WTC11 (cell line): ENCODE measurements at regions of chr12 and their contacts with region 1.

Region 1: DNA sequence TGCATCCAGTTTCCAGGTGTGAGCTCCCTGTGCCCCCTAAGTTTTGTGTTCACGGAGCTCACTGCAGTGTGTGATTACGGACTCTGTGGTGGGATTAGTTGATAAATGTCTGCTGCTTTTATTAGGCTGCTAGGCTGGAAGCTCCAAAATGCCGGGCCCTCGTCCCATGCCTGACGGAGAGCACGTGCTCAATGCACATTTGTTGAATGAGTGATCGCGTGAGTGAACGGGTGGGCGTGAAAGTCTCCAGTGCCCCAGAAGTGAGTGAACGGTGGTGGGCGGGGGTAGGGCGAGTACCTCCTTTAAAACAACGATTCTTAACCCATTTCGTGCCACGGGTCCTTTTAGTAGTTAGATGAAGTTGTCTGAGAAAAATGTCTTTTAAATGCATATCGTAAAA is 175.5 kb downstream of the AACS start:
- DNase-seq: no peak
- ATAC-seq: no peak
- H3K4me3 Mint-ChIP-seq: no peak overlapping the region
- H3K27ac Mint-ChIP-seq: peak overlapping the region; percentile 80; the same call in 1 of the 2 replicates
- H3K4me1 Mint-ChIP-seq: peaks cover 47% of the 10 kb centered on the region
- H3K27me3 Mint-ChIP-seq: no peaks in the 10 kb centered on the region
- CTCF ChIP-seq: no peak

Region 2: DNA sequence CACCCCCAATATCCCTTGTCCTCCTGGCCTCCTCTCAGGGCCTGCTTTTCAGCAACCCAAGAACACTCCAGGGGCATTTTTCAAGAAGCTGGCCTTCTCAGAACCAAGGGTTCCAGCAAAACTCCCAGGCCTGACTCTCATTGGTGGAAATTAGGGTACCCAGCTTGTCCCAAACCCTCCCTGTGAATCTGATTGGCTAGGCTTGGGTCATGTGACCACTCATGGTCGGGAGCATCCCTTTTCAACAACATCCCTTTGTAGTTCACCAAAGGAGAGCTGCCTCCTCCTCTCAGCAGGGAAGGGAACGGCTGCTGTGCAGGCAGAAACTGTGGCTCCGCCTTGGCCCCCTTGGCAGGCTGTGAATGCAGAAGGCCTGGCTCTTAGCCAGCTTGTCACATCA is 81.0 kb before region 1 on chr12:
- CTCF ChIA-PET with region 1: no interaction called
- POLR2A ChIA-PET with region 1: no interaction called
- DNase-seq: no peak
- ATAC-seq: peak; percentile 18; the same call in 1 of the 2 replicates
- H3K4me3 Mint-ChIP-seq: no peak overlapping the region
- H3K27ac Mint-ChIP-seq: no peak overlapping the region
- H3K4me1 Mint-ChIP-seq: peaks cover 8% of the 10 kb centered on the region
- H3K27me3 Mint-ChIP-seq: no peaks in the 10 kb centered on the region; the same call in none of the 2 replicates
- CTCF ChIP-seq: no peak

Region 3: GRCh38 chr12:125220404-125220803 is 20.3 kb before region 1 on chr12:
- CTCF ChIA-PET with region 1: interaction called, 11 read pairs
- POLR2A ChIA-PET with region 1: no interaction called
- DNase-seq: no peak
- ATAC-seq: no peak
- H3K4me3 Mint-ChIP-seq: no peak overlapping the region
- H3K27ac Mint-ChIP-seq: no peak overlapping the region
- H3K4me1 Mint-ChIP-seq: peaks cover 31% of the 10 kb centered on the region
- H3K27me3 Mint-ChIP-seq: no peaks in the 10 kb centered on the region
- CTCF ChIP-seq: no peak

Region 4: DNA sequence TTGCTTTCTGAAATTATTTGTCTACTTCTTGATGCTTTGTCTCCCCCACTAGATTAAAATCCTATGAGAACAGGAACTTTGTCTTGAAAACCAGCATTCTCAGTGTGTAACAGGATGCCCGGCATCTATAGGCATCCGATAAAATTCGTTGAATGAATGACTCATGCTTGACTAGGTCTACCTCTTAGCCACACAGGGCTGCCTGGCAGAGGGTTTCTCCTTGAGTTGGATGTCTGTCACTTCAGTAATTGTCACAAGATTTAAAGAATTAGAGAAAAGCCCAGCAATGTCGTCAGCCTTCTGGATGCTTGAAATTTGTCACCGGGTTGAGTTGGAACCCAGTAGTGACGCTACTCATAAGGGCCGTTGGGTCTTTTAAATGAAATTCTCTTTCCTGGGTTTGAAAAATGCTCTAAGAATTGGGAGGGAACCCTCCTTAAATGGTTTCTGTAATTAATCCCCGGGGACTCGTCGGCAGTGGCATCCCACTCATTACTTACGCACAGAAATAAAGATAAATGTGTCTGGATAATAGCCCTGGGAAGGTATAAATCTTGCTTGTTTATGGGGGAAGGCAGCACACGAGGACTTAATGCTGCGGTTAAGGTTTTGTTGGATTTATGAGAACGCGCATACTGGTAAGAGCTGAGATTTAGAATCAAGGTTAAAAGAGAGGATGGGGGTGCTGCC is 18.6 kb after region 1 on chr12:
- CTCF ChIA-PET with region 1: interaction called, 15 read pairs
- POLR2A ChIA-PET with region 1: no interaction called
- DNase-seq: no peak
- ATAC-seq: no peak
- H3K4me3 Mint-ChIP-seq: no peak overlapping the region
- H3K27ac Mint-ChIP-seq: no peak overlapping the region
- H3K4me1 Mint-ChIP-seq: peaks cover 12% of the 10 kb centered on the region
- H3K27me3 Mint-ChIP-seq: no peaks in the 10 kb centered on the region
- CTCF ChIP-seq: no peak

Region 5: GRCh38 chr12:125330645-125331341 is 90.1 kb after region 1 on chr12:
- CTCF ChIA-PET with region 1: interaction called, 18 read pairs
- POLR2A ChIA-PET with region 1: no interaction called
- DNase-seq: peak; percentile 94
- ATAC-seq: peak; percentile 87
- H3K4me3 Mint-ChIP-seq: peak overlapping the region; percentile 72
- H3K27ac Mint-ChIP-seq: no peak overlapping the region
- H3K4me1 Mint-ChIP-seq: peaks cover 54% of the 10 kb centered on the region
- H3K27me3 Mint-ChIP-seq: peaks cover 3% of the 10 kb centered on the region; the same call in 1 of the 2 replicates
- CTCF ChIP-seq: peak; percentile 89